ENCODE measurements at regions of chr9 and their contacts with region 1.

Region 1: DNA sequence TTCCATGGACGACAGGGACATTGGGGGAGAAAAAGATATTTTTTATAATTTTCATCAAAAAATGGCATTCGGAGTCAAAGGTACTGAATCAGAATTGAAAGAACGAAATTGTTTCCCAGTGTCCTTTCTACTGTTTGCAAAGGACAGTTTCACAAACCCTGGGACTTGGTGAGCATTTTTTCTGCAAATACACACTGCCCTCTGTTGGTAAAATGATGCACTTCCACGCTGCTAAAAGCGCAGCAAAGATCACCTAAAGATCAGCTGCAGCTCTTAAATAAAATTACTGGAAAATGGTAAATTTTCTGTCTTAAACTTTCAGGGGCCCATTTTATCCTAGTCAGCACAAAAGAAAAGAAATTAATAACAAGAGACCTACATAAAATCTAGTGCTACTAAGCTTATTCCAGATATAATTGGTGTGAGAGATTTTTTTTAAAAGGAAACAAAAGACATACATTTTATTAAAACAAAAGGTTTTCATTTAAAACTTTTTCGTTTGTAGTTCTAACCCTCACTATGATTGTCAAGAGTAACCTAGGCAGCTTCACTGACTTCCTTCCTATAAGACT is 566.0 kb downstream of the CAAP1 start:
- DNase-seq: peak; percentile 92

Region 2: DNA sequence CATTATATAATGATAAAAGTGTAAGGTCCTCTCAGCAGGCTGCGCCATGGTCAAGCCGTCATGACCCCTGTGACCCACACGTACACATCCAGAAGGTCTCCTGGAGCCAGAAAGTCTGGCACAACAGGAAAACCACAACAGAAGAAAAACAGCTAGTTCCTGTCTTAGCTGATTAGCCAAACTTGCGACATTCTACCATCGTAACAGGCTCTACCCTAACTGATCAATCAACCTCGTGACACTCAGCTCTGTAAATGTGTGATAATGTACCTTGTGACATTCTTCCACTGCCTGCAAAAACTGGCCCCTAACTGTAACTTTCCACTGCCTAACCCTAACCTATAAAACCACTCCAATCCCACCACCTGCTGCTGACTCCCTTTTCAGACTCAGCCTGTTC is 332.0 kb before region 1 on chr9:
- in situ Hi-C with region 1: loop called (anchors 25 kb)
- DNase-seq: peak; percentile 97

Region 3: DNA sequence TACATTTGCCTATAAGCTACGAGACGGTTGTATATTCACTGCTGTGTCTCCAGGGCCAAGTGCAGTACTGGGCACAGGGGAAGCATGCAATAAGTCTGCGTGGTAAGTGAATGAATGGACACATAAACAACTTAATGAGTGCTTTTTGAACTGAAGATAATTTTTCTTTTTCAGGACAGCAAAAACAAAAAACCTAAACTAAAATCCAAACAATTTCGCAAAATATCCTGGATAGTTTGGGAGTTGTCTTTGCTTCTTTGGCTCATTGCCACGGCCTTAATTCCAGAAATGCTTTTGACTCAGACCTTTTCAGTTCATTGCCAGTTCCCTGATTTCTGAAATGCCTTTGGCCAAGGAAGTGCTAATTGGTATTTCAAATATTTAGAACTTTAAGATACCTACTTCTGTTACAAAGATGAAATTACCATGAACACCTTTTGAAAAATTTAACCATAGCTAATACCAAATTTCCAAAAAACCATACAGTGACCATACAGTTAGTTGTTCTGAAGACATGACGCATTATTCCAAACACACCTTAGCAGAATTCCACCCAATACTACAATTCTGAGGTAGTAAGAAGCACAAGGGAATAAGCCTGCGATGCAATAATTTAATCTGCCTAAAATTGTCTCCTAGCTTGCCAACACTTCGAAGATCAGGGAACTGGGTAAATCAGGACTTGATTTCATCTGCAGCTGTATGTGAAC is 825.3 kb after region 1 on chr9:
- in situ Hi-C with region 1: no loop called
- DNase-seq: no peak

Measured in KBM-7 (cell line).